Psoas muscle (tissue), 8 donors: ENCODE measurements at regions of chr12 and their contacts with region 1.

Region 1: DNA sequence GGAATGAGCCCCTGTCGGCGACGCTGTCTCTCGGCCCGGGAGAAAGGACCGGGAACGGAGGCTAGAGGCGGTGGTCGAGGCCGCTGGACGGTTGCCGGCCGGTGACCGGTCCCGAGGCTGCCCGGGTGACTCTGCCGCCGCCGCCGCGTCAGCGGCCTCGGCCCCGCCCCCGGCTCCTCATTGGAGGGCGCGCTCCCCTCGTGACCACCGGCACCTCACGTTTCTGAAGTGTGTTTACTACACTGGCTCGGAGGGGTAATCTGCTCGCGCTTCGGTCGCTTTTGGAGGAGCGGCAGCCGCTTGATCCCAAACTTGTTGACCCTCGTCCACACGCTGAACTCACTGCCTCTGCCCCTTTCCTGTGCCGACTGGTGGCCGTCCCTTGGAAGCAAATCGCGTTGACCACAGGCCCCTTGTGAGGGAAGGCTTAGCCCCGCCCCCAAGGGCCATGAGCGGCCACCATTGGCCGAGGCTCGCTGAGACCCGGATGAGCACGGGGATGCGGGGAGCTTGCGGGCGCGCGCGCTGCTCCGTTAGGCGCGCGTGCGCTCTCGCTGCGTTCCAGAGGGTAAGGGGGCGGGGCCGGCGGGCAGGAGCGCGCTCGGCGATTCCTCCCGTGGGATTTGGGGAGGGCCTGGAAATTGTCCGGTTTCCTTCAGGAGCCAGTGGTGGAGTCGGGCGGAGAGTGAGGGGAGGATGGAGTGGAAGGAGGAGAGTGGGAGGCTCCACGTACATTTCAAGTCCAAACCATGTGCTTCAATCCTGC is at the start of gene CRY1:
- DNase-seq: peak; percentile 98
- ATAC-seq: peak; percentile 95 to 97 (median 96)
- H3K4me3 ChIP-seq: peak within 1 kb of the TSS; percentile 96
- H3K27ac ChIP-seq: peak within 1 kb of the TSS; percentile 98
- H3K4me1 ChIP-seq: peaks cover 17% of the 10 kb centered on the region
- H3K27me3 ChIP-seq: no peaks in the 10 kb centered on the region
- CTCF ChIP-seq: no peak
- total RNA-seq, gene CRY1: 10.2 to 18.8 (median 12.9) TPM

Region 2: DNA sequence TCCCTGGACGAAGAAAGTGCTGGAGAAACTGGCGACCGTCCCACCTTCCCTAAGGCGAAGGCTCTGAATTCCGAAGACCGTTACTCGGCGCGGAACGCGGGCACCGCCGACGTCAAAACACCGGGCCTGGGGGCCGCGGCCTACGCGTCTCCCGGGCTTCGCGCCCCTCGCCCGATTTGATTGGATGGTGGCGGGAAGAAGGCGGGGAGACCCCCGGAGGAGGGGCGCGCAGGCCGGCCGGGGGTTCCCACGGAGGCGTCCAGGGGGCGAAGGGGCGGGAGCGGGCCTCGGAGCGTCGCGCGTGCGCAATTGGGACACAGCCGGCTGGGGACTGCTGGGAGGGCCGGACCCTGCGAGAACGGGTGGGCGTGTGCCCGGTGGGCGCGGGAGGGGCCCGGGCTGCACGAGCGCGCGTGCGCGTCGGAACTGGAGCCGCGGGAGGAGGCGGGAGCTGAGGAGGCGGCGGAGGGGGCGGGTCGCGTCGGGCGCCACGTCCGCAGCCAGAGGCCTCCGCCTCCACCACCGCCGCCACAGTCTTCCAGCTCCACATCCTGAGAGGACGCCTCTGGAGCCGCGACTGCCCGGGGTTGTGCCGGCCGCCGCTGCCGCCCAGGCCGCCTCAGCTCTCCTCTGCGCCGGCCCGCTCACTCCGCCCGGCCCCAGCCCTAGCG is 138.1 kb before region 1 on chr12 and contains the start of gene TMEM263:
- intact Hi-C with region 1: loop called in 1 of 2 experiments (anchors 10 kb)
- DNase-seq: peak; percentile 94 to 97
- ATAC-seq: peak; percentile 92 to 96 (median 94)
- H3K4me3 ChIP-seq: peak within 1 kb of the TSS; percentile 93
- H3K27ac ChIP-seq: peak within 1 kb of the TSS; percentile 96
- H3K4me1 ChIP-seq: peaks cover 37% of the 10 kb centered on the region
- H3K27me3 ChIP-seq: no peaks in the 10 kb centered on the region
- CTCF ChIP-seq: no peak
- total RNA-seq, gene TMEM263: 13.4 to 18.2 (median 16.4) TPM

Region 3: DNA sequence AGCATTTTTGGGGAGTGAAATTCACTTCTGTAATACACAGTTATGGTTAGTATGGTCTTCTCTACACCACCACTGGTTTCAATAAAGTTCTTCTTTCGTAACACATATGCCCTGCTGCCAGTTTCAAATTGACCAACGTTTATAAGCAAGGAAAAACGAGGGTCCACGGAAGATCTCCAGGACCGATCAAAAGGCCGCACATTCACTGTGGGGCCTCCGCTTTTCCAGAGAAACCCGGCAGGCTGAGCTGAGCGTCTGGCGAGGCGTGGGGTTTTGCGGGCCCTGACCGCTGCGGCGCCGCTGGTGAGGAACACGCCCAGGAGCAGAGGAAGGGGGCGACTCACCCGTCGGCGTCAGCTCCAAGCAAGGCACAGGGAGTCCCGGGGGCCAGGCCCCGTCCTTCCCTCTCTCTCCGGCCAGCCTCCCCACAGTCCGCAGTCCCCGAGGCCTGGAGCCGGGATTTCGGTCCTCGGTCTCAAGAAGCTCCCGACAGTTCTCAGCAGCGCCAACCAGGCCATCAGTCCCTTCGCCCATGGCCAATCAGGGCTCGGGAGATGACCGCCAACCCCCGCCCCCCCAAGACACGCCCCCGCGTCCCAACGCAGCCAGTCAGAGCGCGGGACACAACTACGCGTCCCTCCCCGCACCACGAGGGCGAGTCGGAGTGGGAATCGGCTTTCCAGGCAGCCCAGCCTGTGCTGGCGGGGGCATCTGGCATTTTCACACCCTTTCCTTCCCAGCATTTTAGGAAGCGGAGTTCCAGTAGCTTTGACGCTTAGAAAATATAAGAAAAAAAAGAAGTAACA is 106.8 kb before region 1 on chr12 and contains the start of gene MTERF2:
- intact Hi-C with region 1: loop called in 1 of 2 experiments (anchors 2 kb)
- DNase-seq: peak; percentile 95 to 96
- ATAC-seq: peak; percentile 97 to 98 (median 98)
- H3K4me3 ChIP-seq: peak within 1 kb of the TSS; percentile 92
- H3K27ac ChIP-seq: peak within 1 kb of the TSS; percentile 95
- H3K4me1 ChIP-seq: peaks cover 22% of the 10 kb centered on the region
- H3K27me3 ChIP-seq: no peaks in the 10 kb centered on the region
- CTCF ChIP-seq: no peak
- total RNA-seq, gene MTERF2: 12.4 to 14.9 (median 13.0) TPM

Region 4: GRCh38 chr12:107033758-107034739 is 59.6 kb before region 1 on chr12:
- intact Hi-C with region 1: loop called (anchors 2 to 5 kb)
- DNase-seq: no peak
- ATAC-seq: peak in 1 of 4 donors; percentile 6
- H3K4me3 ChIP-seq: no peak overlapping the region
- H3K27ac ChIP-seq: peak overlapping the region; percentile 3
- H3K4me1 ChIP-seq: peaks cover 31% of the 10 kb centered on the region
- H3K27me3 ChIP-seq: no peaks in the 10 kb centered on the region
- CTCF ChIP-seq: no peak

Region 5: GRCh38 chr12:107045186-107045585 is 48.4 kb before region 1 on chr12:
- intact Hi-C with region 1: no loop called
- DNase-seq: no peak
- ATAC-seq: no peak
- H3K4me3 ChIP-seq: no peak overlapping the region
- H3K27ac ChIP-seq: no peak overlapping the region
- H3K4me1 ChIP-seq: peaks cover 2% of the 10 kb centered on the region
- H3K27me3 ChIP-seq: no peaks in the 10 kb centered on the region
- CTCF ChIP-seq: no peak